Dendritic cell treated with granulocyte-macrophage colony-stimulating factor and Interleukin-4, amounts not matched to agents 40 ng/mL and 50 ng/mL, for 4 days (primary cell): ENCODE measurements at regions of chr3 and their contacts with region 1.

Region 1: GRCh38 chr3:48273594-48274211 is 32.8 kb downstream of the ZNF589 start:
- H3K4me3 Mint-ChIP-seq: no peak overlapping the region
- H3K27ac Mint-ChIP-seq: no peak overlapping the region
- H3K4me1 Mint-ChIP-seq: peaks cover 10% of the 10 kb centered on the region
- H3K27me3 Mint-ChIP-seq: no peaks in the 10 kb centered on the region

Region 2: GRCh38 chr3:48400824-48401433 is 127.2 kb after region 1 on chr3:
- intact Hi-C with region 1: loop called (anchors 10 kb)
- H3K4me3 Mint-ChIP-seq: no peak overlapping the region
- H3K27ac Mint-ChIP-seq: no peak overlapping the region
- H3K4me1 Mint-ChIP-seq: peaks cover 11% of the 10 kb centered on the region
- H3K27me3 Mint-ChIP-seq: no peaks in the 10 kb centered on the region